Natural killer cell (primary cell): ENCODE measurements at regions of chr15 and their contacts with region 1.

Region 1: GRCh38 chr15:85646538-85647091 is 148.1 kb downstream of the KLHL25 start:
- DNase-seq: peak; percentile 50 to 82
- ATAC-seq: peak; percentile 71 to 88 (median 83)
- H3K4me3 ChIP-seq: no peak overlapping the region
- H3K4me3 Mint-ChIP-seq: peak overlapping the region; percentile 79
- H3K27ac ChIP-seq: peak overlapping the region; percentile 85
- H3K27ac Mint-ChIP-seq: peak overlapping the region; percentile 91 to 94
- H3K4me1 ChIP-seq: peaks cover 44% of the 10 kb centered on the region
- H3K4me1 Mint-ChIP-seq: peaks cover 46 to 48% of the 10 kb centered on the region in 2 donors
- H3K27me3 ChIP-seq: no peaks in the 10 kb centered on the region
- H3K27me3 Mint-ChIP-seq: no peaks in the 10 kb centered on the region
- CTCF ChIP-seq: no peak

Region 2: GRCh38 chr15:85582131-85583079 is 64.2 kb before region 1 on chr15:
- intact Hi-C with region 1: loop called (anchors 1 kb)
- DNase-seq: peak; percentile 66 to 83
- ATAC-seq: peak; percentile 55 to 77 (median 68)
- H3K4me3 ChIP-seq: peak overlapping the region; percentile 47
- H3K4me3 Mint-ChIP-seq: peak overlapping the region; percentile 95
- H3K27ac ChIP-seq: peak overlapping the region; percentile 96
- H3K27ac Mint-ChIP-seq: peak overlapping the region; percentile 95 to 98
- H3K4me1 ChIP-seq: peaks cover 43% of the 10 kb centered on the region
- H3K4me1 Mint-ChIP-seq: peaks cover 64 to 66% of the 10 kb centered on the region in 2 donors
- H3K27me3 ChIP-seq: no peaks in the 10 kb centered on the region
- H3K27me3 Mint-ChIP-seq: no peaks in the 10 kb centered on the region
- CTCF ChIP-seq: no peak

Region 3: DNA sequence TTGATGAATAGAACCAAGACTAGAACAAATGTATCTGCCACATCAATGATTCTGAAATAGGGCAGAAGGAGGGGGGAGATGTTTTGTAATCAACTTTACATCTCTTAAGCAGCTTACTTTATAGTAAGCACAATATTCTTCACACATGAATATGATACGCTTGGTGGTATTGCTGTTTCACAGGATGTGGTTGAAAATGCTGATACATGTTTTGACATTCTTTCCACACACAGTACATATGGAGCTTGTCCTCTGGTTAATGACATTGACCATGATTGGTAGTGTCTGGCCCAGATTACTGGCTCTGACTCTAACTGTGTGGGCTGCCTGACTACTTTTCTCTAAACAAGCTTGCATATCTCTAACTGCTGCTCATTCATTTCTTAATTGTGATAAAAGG is 20.8 kb before region 1 on chr15:
- intact Hi-C with region 1: loop called (anchors 1 kb)
- DNase-seq: peak in 1 of 2 donors; percentile 73
- ATAC-seq: peak; percentile 81 to 95 (median 89)
- H3K4me3 ChIP-seq: no peak overlapping the region
- H3K4me3 Mint-ChIP-seq: peak overlapping the region; percentile 71
- H3K27ac ChIP-seq: peak overlapping the region; percentile 83
- H3K27ac Mint-ChIP-seq: peak overlapping the region; percentile 88 to 94
- H3K4me1 ChIP-seq: peaks cover 16% of the 10 kb centered on the region
- H3K4me1 Mint-ChIP-seq: peaks cover 74 to 78% of the 10 kb centered on the region in 2 donors
- H3K27me3 ChIP-seq: no peaks in the 10 kb centered on the region
- H3K27me3 Mint-ChIP-seq: no peaks in the 10 kb centered on the region
- CTCF ChIP-seq: no peak

Region 4: DNA sequence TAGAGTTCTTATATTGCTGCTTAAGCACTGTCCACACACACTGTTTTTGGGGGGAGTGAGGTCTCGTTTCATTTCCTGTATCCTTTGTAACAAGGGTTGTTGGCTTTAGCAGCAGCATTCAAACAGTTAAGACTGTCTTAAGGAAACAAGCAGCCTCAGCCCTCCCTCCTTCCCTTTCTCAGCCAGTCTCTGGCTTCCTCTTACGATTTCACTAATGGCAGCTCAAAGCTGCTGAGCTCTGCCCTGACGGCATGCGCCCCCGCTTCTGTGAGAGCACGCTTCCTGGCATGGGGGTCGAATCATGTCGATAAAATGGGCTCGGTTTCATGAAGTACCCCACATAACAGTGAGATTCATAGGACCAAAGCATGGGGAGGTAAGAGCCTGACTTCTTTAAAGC is 43.1 kb after region 1 on chr15:
- intact Hi-C with region 1: loop called (anchors 1 kb)
- DNase-seq: peak; percentile 72 to 86
- ATAC-seq: peak; percentile 51 to 75 (median 68)
- H3K4me3 ChIP-seq: peak overlapping the region; percentile 70
- H3K4me3 Mint-ChIP-seq: peak overlapping the region; percentile 99
- H3K27ac ChIP-seq: peak overlapping the region; percentile 94
- H3K27ac Mint-ChIP-seq: peak overlapping the region; percentile 99 to 100
- H3K4me1 ChIP-seq: peaks cover 32% of the 10 kb centered on the region
- H3K4me1 Mint-ChIP-seq: peaks cover 62 to 65% of the 10 kb centered on the region in 2 donors
- H3K27me3 ChIP-seq: no peaks in the 10 kb centered on the region
- H3K27me3 Mint-ChIP-seq: no peaks in the 10 kb centered on the region
- CTCF ChIP-seq: no peak

Region 5: GRCh38 chr15:86213420-86214287 is 567.0 kb after region 1 on chr15:
- intact Hi-C with region 1: no loop called
- DNase-seq: no peak
- ATAC-seq: no peak
- H3K4me3 ChIP-seq: no peak overlapping the region
- H3K4me3 Mint-ChIP-seq: no peak overlapping the region
- H3K27ac ChIP-seq: no peak overlapping the region
- H3K27ac Mint-ChIP-seq: no peak overlapping the region
- H3K4me1 ChIP-seq: no peaks in the 10 kb centered on the region
- H3K4me1 Mint-ChIP-seq: no peaks in the 10 kb centered on the region
- H3K27me3 ChIP-seq: no peaks in the 10 kb centered on the region
- H3K27me3 Mint-ChIP-seq: peaks cover 9 to 18% of the 10 kb centered on the region in 2 donors
- CTCF ChIP-seq: no peak